ENCODE measurements at regions of chr15 and their contacts with region 1.

Region 1: DNA sequence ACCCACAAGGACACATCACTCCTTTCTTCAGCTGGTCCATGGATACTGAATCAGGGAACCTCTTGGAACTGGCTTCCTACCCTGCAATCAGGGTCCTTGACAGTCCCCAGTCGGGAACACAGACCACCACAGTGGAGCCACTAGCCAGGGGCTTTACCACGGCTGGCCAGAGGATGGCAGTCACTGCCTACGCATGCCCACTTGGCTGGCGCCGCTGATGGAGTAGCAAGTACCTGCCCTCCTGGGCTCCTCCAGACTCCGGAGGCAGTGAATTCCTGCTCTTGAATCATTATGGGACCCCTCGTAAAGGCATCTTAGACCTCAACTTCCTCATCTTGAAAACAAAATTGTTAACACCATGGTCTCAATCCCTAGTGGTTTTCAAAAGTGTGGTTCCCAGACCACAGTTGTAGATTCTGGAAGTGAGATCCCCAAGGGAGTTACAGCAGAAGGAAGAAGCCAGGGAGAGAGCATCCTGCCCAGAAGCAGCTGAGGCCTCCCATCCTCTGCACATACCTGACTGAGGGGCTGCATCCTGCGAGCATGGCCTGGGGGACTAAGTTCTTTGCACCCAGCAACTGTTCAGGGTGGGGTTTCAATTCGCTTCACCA is 9.1 kb upstream of the SKIC8 start:
- DNase-seq: peak; percentile 53
- H3K4me3 ChIP-seq: no peak overlapping the region
- H3K27ac ChIP-seq: no peak overlapping the region
- H3K4me1 ChIP-seq: no peaks in the 10 kb centered on the region
- H3K27me3 ChIP-seq: peaks cover 57% of the 10 kb centered on the region
- CTCF ChIP-seq: peak; percentile 87

Region 2: DNA sequence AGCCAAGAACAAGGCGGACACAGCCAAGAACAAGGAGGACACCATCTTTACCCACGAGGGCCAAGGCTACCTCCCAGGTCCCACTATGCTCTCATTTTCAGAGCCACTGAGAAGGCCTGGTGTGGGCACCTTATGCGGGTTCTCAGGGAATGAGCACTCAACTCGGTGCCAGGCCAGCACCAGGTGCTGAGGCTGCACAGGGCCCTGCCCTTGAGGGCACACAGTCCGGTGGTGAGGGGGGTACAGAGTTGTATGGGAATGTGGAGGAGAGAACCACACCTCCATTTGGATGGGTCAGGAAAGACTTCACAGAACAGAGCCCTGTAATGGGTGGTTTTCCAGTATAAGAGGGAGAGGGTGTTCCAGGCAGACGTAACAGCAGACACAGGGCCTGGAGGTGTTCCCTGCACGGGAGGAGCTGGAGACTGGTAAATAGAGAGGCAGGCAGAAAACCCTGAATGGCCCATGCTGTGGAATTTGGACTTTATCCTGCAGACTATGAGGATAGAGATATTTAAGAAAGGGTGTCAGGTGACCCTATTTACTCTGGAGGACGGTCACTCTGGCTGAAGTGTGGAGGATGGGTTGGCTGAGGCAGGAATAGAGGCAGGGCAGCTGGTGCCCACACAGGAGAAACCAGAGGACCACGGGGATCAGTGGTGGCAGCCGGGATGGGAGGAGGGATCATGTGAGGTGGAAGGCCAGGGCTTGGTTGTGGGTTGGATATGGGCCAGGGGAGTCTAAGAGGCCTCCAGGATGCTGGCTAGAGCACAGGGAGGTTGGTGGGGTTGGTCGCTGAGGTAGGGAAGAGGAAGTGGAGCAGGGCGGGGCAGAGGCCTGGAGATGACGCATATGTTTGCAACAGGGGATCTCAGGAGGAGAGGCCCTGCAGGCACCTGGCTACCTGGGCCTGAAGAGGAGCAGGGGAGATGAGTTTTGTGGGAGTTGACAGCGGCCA is 66.2 kb after region 1 on chr15:
- intact Hi-C with region 1: no loop called
- DNase-seq: no peak
- H3K4me3 ChIP-seq: no peak overlapping the region
- H3K27ac ChIP-seq: no peak overlapping the region
- H3K4me1 ChIP-seq: peaks cover 5% of the 10 kb centered on the region
- H3K27me3 ChIP-seq: no peaks in the 10 kb centered on the region
- CTCF ChIP-seq: no peak

Region 3: GRCh38 chr15:78422571-78423340 is 114.2 kb after region 1 on chr15:
- intact Hi-C with region 1: loop called (anchors 5 kb)
- DNase-seq: peak; percentile 60
- H3K4me3 ChIP-seq: no peak overlapping the region
- H3K27ac ChIP-seq: no peak overlapping the region
- H3K4me1 ChIP-seq: no peaks in the 10 kb centered on the region
- H3K27me3 ChIP-seq: peaks cover 13% of the 10 kb centered on the region
- CTCF ChIP-seq: peak; percentile 94

Region 4: GRCh38 chr15:78654272-78654671 is 345.7 kb after region 1 on chr15:
- intact Hi-C with region 1: no loop called
- DNase-seq: no peak
- H3K4me3 ChIP-seq: no peak overlapping the region
- H3K27ac ChIP-seq: no peak overlapping the region
- H3K4me1 ChIP-seq: no peaks in the 10 kb centered on the region
- H3K27me3 ChIP-seq: no peaks in the 10 kb centered on the region
- CTCF ChIP-seq: no peak